ENCODE measurements at regions of chr14 and their contacts with region 1.

Region 1: DNA sequence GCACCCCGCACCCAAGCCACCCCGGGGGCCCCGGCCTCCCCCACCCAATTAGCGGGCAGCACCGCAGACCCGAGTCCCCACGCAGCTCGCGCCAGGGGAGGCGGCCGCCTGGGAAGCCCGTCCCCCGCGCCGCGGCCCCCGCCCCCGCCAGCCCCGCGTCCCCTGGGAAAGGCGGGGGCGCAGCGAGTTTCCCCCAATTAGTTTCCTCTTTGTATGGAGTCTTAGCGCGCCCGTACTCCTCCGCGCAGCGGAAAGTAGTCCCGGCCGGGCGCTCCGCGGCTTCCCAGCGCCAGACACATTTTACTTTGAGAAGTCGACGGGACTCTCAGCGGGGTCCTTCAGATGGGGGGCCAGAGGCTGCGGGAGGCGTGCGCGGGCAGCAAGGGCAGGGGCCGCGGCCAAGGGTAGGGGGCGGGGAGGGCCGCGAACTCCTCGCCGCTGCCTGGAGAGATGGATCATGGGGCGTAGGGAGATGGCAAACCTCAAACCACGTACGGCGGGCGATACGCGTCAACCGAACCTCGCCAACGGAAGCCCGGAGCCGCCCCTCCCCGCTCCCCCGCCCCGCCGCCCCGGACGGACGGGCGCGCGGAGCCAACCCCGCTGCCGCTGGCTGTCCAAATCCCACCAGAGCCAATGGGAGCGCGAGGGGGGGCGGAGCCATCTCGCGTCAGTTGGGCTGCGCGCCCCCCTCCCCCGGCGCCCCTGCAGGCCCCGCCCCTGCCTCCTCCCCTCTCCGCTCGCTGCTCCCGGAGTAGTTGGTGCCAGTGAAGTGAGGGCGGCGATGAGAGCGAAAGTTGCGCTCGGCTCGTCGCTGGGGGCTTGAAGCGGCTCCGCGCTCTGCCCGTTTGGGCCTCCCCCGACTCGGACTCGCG is at the start of gene RCOR1:
- DNase-seq: peak; percentile 96
- H3K4me3 ChIP-seq: peak within 1 kb of the TSS; percentile 84 to 100 (median 87)
- H3K27ac ChIP-seq: peak within 1 kb of the TSS; percentile 95
- H3K4me1 ChIP-seq: peaks cover 20% of the 10 kb centered on the region
- H3K27me3 ChIP-seq: no peaks in the 10 kb centered on the region
- CTCF ChIP-seq: no peak
- POLR2A ChIP-seq: peak; percentile 91
- total RNA-seq, gene RCOR1: 31.8 and 32.2 TPM in 2 replicates

Region 2: GRCh38 chr14:102437997-102438915 is 153.9 kb before region 1 on chr14:
- CTCF ChIA-PET with region 1: interaction called, 5 read pairs
- POLR2A ChIA-PET with region 1: no interaction called
- dilution Hi-C with region 1: no loop called
- intact Hi-C with region 1: loop called (anchors 1 kb)
- DNase-seq: peak; percentile 73
- H3K4me3 ChIP-seq: peak overlapping the region in 1 of 3 experiments; percentile 13
- H3K27ac ChIP-seq: no peak overlapping the region
- H3K4me1 ChIP-seq: peaks cover 2% of the 10 kb centered on the region
- H3K27me3 ChIP-seq: no peaks in the 10 kb centered on the region
- CTCF ChIP-seq: peak; percentile 79 to 84
- POLR2A ChIP-seq: no peak

Region 3: GRCh38 chr14:102539580-102540314 is 52.4 kb before region 1 on chr14:
- CTCF ChIA-PET with region 1: interaction called, 5 read pairs
- POLR2A ChIA-PET with region 1: no interaction called
- dilution Hi-C with region 1: no loop called
- intact Hi-C with region 1: loop called (anchors 5 kb)
- DNase-seq: no peak
- H3K4me3 ChIP-seq: no peak overlapping the region
- H3K27ac ChIP-seq: no peak overlapping the region
- H3K4me1 ChIP-seq: no peaks in the 10 kb centered on the region
- H3K27me3 ChIP-seq: peaks cover 6 to 9% of the 10 kb centered on the region in 2 experiments
- CTCF ChIP-seq: no peak
- POLR2A ChIP-seq: no peak

Region 4: DNA sequence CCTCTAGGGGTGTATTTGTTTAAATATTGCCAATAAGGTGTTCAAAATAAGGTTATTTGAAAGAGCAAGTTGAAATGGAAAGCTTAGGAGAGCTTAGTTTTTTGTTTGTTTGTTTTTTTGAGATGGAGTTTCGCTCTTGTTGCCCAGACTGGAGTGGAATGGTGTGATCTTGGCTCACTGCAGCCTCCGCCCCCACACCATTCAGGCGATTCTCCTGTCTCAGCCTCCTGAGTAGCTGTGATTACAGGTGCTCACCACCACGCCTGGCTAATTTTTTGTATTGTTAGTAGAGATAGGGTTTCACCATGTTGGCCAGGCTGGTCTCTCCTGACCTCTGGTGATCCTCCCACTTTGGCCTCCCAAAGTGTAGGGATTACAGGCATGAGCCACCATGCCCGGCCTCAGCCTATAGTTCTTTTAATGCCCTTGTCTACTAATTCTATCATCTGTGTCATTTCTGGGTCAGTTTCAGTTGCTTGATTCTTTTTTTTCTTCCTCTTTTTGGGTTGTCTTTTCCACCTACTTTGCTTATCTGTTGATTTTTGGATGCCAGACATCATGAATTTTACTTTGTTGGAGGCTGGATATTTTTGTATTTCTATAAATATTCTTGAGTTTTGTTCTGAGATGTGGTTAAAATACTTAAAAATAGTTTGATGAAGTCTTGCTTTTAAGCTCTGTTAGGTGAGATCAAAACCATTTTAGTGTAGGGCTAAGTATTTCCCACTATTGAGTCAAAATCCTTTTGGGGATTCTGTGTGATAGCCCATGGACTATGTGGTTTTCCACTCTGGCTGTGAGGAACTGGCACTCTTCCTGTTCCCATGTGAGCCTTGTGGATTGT is 19.1 kb after region 1 on chr14:
- CTCF ChIA-PET with region 1: interaction called, 24 read pairs
- POLR2A ChIA-PET with region 1: no interaction called
- dilution Hi-C with region 1: no loop called
- intact Hi-C with region 1: no loop called
- DNase-seq: no peak
- H3K4me3 ChIP-seq: no peak overlapping the region
- H3K27ac ChIP-seq: no peak overlapping the region
- H3K4me1 ChIP-seq: no peaks in the 10 kb centered on the region
- H3K27me3 ChIP-seq: no peaks in the 10 kb centered on the region
- CTCF ChIP-seq: no peak
- POLR2A ChIP-seq: no peak

Region 5: GRCh38 chr14:102655170-102655569 is 63.0 kb after region 1 on chr14:
- CTCF ChIA-PET with region 1: interaction called, 6 read pairs
- POLR2A ChIA-PET with region 1: no interaction called
- dilution Hi-C with region 1: no loop called
- intact Hi-C with region 1: loop called (anchors 1 kb)
- DNase-seq: peak; percentile 92
- H3K4me3 ChIP-seq: peak overlapping the region in 1 of 3 experiments; percentile 51
- H3K27ac ChIP-seq: peak overlapping the region; percentile 97
- H3K4me1 ChIP-seq: peaks cover 20% of the 10 kb centered on the region
- H3K27me3 ChIP-seq: no peaks in the 10 kb centered on the region
- CTCF ChIP-seq: no peak
- POLR2A ChIP-seq: no peak

Region 6: DNA sequence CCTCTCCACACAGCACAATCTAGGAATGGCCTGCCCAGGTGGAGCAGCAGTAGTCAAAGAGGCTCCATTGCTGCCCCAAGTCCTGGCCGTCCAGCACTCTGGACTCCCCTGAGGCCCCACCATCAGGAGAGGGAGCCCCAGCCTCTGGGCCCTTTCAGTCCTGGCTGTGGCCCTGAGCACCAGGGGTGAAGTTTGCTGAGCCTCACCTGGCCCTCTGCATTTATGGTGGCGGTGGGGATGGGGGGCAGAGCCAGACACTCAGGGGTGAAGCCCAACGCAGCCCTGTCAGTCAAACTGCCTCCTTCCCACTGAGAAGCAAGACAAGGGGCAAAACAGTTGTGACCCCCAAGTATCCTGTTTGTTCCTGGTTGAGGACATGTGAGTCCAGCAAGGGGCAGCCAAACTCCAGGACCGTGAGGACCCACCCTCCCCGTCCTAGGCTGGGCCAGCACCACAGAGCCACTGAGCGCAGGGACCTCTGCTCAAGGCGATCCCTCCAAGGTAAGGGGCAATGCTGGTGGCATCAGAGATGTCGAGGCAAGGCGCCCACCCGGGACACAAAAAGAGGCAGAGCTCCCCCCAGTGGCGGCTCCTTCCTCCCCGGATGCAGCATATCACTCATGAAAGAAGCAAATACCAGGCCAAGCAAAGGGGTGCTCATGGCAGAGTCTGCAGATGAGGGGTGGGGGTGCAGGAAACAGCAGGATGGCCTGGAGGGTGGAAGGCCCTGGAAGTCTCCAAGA is 325.5 kb after region 1 on chr14:
- CTCF ChIA-PET with region 1: no interaction called
- POLR2A ChIA-PET with region 1: no interaction called
- dilution Hi-C with region 1: no loop called
- intact Hi-C with region 1: loop called (anchors 2 kb)
- DNase-seq: peak; percentile 47
- H3K4me3 ChIP-seq: no peak overlapping the region
- H3K27ac ChIP-seq: no peak overlapping the region
- H3K4me1 ChIP-seq: no peaks in the 10 kb centered on the region
- H3K27me3 ChIP-seq: peaks cover 7 to 8% of the 10 kb centered on the region in 2 experiments
- CTCF ChIP-seq: peak; percentile 72 to 78
- POLR2A ChIP-seq: no peak

Measured in endothelial cell of umbilical vein (primary cell).